B cell (primary cell): ENCODE measurements at regions of chr11 and their contacts with region 1.

Region 1: DNA sequence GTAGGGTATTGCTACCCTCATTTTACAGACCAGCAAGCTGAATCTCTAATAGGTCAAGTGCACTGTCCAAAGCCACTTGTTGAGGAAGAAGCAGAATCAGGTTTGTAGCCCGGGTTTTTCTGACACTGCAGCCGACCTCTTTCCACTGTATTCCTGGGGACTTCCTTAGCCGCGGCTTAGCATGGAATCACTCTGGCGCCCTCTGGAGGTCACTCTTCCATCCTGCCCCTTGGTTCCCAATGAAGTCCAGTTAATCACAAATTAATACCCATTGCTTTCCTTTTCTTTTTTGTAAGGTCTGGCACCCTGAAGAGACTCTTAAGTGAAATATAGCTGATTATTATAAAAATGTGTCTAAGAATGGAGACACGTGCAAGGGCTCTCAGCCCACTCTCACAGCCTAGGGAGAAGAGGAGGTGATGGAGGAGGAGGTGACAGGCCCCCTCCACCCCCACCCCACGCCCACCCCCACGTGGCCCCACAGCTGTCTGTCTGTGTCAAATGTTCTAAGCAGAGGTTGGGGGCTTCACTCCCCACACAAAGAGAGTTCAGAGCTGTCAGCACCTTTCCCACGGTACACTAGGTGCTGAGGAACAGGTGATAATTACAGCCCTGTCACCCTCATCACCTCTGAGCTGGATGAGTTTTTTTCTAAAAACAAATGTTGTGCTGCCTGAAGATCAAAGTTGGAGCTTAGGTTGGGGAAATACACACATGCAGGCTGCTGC is 57.7 kb upstream of the DRD2 start:
- DNase-seq: peak; percentile 64
- ATAC-seq: peak; percentile 41
- H3K4me3 ChIP-seq: no peak overlapping the region
- H3K4me3 Mint-ChIP-seq: no peak overlapping the region
- H3K27ac ChIP-seq: no peak overlapping the region
- H3K27ac Mint-ChIP-seq: no peak overlapping the region
- H3K4me1 ChIP-seq: no peaks in the 10 kb centered on the region
- H3K4me1 Mint-ChIP-seq: no peaks in the 10 kb centered on the region
- H3K27me3 ChIP-seq: peaks cover 0 to 10% (median 0%) of the 10 kb centered on the region in 4 experiments
- H3K27me3 Mint-ChIP-seq: peaks cover 34% of the 10 kb centered on the region
- CTCF ChIP-seq: peak; percentile 80

Region 2: GRCh38 chr11:113305440-113306336 is 227.2 kb before region 1 on chr11:
- CTCF ChIA-PET with region 1: interaction called, 80 read pairs
- POLR2A ChIA-PET with region 1: no interaction called
- intact Hi-C with region 1: no loop called
- DNase-seq: peak; percentile 78
- ATAC-seq: peak; percentile 82
- H3K4me3 ChIP-seq: no peak overlapping the region
- H3K4me3 Mint-ChIP-seq: no peak overlapping the region
- H3K27ac ChIP-seq: no peak overlapping the region
- H3K27ac Mint-ChIP-seq: no peak overlapping the region
- H3K4me1 ChIP-seq: peaks cover 0 to 5% of the 10 kb centered on the region in 2 donors
- H3K4me1 Mint-ChIP-seq: no peaks in the 10 kb centered on the region
- H3K27me3 ChIP-seq: peaks cover 0 to 3% (median 0%) of the 10 kb centered on the region in 4 experiments
- H3K27me3 Mint-ChIP-seq: peaks cover 7% of the 10 kb centered on the region
- CTCF ChIP-seq: peak; percentile 98

Region 3: GRCh38 chr11:113363406-113363805 is 169.5 kb before region 1 on chr11:
- CTCF ChIA-PET with region 1: no interaction called
- POLR2A ChIA-PET with region 1: no interaction called
- intact Hi-C with region 1: no loop called
- DNase-seq: no peak
- ATAC-seq: no peak
- H3K4me3 ChIP-seq: no peak overlapping the region
- H3K4me3 Mint-ChIP-seq: no peak overlapping the region
- H3K27ac ChIP-seq: no peak overlapping the region
- H3K27ac Mint-ChIP-seq: no peak overlapping the region
- H3K4me1 ChIP-seq: no peaks in the 10 kb centered on the region
- H3K4me1 Mint-ChIP-seq: no peaks in the 10 kb centered on the region
- H3K27me3 ChIP-seq: no peaks in the 10 kb centered on the region
- H3K27me3 Mint-ChIP-seq: no peaks in the 10 kb centered on the region
- CTCF ChIP-seq: no peak

Region 4: DNA sequence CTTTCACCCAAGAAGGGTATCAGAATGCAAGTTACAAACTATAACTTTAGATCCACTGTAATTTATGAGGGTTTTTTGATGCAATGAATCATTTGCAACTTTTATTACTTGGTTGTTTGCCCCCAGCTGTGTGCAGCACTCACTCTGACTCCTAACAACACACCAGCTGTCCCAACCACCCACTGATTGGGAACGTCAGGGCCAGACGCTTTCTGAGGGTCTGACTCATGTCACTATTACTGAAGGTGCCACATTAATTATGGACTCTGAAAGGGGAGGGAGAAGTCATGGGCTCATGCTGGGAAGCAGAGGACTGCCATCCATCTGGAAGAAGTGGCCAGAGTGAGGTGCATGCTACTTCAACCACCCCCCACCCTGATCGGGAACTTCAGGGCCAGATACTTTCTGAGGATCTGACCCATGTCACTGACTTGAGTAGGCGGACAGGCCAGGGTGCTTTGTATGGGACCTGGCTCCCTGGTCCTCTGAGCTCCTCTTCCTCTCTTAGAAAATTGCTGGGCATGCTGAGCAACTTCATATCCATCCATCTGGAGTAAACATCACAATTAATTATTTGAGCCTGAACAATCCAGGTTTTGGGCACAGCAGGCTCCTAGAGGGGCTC is 12.8 kb before region 1 on chr11:
- CTCF ChIA-PET with region 1: interaction called, 16 read pairs
- POLR2A ChIA-PET with region 1: no interaction called
- intact Hi-C with region 1: no loop called
- DNase-seq: no peak
- ATAC-seq: no peak
- H3K4me3 ChIP-seq: no peak overlapping the region
- H3K4me3 Mint-ChIP-seq: no peak overlapping the region
- H3K27ac ChIP-seq: no peak overlapping the region
- H3K27ac Mint-ChIP-seq: no peak overlapping the region
- H3K4me1 ChIP-seq: no peaks in the 10 kb centered on the region
- H3K4me1 Mint-ChIP-seq: no peaks in the 10 kb centered on the region
- H3K27me3 ChIP-seq: peaks cover 0 to 7% (median 2%) of the 10 kb centered on the region in 4 experiments
- H3K27me3 Mint-ChIP-seq: peaks cover 26% of the 10 kb centered on the region
- CTCF ChIP-seq: no peak